ENCODE measurements at regions of chr17 and their contacts with region 1.

Region 1: GRCh38 chr17:67441052-67441927 is 64.2 kb downstream of the PITPNC1 start:
- DNase-seq: peak; percentile 86
- H3K4me3 Mint-ChIP-seq: peak overlapping the region; percentile 84
- H3K27ac Mint-ChIP-seq: peak overlapping the region; percentile 99
- H3K4me1 Mint-ChIP-seq: peaks cover 62% of the 10 kb centered on the region
- H3K27me3 Mint-ChIP-seq: no peaks in the 10 kb centered on the region

Region 2: DNA sequence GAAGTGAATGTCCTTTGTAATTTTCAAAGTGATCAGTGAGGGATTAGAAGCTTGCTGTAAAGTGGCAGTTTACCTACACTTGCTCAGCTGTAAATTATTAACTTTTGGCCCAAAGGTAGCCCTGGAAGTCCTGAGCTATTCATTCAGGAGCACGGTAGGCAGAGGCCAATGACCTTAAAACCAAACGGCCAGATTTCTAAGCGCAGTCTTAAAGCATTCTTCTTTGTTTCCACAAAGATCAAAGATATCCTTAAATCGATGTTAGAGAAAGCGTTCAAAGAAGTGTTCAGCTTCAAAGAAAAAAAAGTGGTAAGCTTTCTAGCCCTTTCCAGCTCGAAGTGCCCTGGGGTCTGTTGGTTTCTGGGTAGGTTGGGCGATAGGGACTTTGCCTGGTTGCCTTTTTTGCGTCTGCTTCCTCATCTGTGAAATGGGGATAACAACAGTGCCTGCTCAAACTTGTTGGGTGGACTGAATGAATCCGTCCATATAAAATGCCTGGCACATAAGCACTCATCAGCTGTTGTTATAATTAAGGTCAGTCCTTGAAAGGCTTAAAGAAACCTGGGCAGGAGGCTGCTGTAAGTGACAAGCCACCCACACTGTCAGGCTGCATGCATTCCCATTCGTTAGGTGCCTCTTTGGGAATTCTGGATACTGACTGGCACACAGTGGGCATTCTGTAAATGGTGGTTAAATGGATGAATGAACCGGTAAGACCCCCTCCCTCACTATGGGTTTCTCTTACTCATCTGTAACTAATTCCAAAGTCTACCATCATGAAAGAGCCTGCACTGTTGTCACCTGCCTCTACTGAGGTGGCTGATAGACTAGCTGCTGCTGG is 1025.7 kb before region 1 on chr17:
- CTCF ChIA-PET with region 1: no interaction called
- POLR2A ChIA-PET with region 1: no interaction called
- intact Hi-C with region 1: no loop called
- DNase-seq: no peak
- H3K4me3 Mint-ChIP-seq: no peak overlapping the region
- H3K27ac Mint-ChIP-seq: no peak overlapping the region
- H3K4me1 Mint-ChIP-seq: peaks cover 65% of the 10 kb centered on the region
- H3K27me3 Mint-ChIP-seq: no peaks in the 10 kb centered on the region

Region 3: DNA sequence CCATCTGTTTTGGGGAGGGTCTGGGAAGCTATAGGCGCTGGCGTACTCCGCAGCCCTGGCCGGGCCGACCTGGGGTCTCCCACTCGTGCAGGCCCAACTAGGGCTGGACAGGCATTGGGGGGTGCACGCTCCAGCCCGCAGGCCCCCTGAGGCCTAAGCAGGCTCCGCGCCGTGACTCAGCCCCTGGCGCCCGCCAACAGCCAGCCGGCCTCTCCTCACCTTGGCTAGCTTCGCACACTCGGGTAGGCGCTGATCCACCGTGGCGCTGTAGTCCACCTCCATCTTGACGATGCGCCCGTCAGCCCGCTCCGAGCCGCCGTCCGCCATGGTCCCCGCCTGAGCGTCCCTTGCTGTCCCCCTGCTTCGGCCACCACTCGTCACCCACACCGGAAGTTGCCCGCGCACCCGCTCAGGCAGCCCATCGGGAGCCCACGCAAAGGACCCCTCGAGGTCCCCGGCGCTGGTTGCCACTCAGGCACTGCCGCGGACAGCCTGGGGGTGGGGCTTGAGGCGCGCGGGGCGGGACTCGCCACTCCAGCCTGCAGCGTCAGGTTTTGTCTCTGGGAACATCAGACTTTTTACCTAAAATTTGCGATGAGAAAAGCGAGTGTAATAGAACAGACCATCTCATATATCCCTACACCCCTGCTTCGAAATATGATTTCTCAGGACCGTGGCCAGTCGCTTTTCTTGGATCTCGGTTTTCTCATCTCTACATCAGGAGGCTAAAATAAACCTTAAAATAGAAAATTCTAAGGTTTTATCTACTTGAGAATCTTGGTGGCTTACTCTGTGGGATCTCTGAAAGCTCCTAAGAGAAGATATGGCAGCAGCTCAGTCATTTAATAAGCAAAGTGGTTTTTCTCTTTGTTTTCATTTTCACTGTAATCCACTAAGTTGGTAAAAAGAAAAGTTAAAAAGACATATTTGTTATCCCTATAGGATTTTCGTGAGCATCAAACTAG is 74.8 kb before region 1 on chr17 and contains the start of gene PSMD12:
- CTCF ChIA-PET with region 1: interaction called, 4 read pairs
- POLR2A ChIA-PET with region 1: interaction called, 11 read pairs
- intact Hi-C with region 1: no loop called
- DNase-seq: peak; percentile 96
- H3K4me3 Mint-ChIP-seq: peak within 1 kb of the TSS; percentile 95
- H3K27ac Mint-ChIP-seq: peak within 1 kb of the TSS; percentile 98
- H3K4me1 Mint-ChIP-seq: peaks cover 45% of the 10 kb centered on the region
- H3K27me3 Mint-ChIP-seq: no peaks in the 10 kb centered on the region
- total RNA-seq, gene PSMD12: 94.0 to 98.6 TPM

Region 4: GRCh38 chr17:67421869-67422273 is 19.4 kb before region 1 on chr17:
- CTCF ChIA-PET with region 1: interaction called, 5 read pairs
- POLR2A ChIA-PET with region 1: interaction called, 17 read pairs
- intact Hi-C with region 1: loop called (anchors 1 kb)
- DNase-seq: peak; percentile 71
- H3K4me3 Mint-ChIP-seq: peak overlapping the region; percentile 42
- H3K27ac Mint-ChIP-seq: peak overlapping the region; percentile 91
- H3K4me1 Mint-ChIP-seq: peaks cover 74% of the 10 kb centered on the region
- H3K27me3 Mint-ChIP-seq: no peaks in the 10 kb centered on the region

Region 5: GRCh38 chr17:67452681-67453554 is 11.6 kb after region 1 on chr17:
- CTCF ChIA-PET with region 1: interaction called, 10 read pairs
- POLR2A ChIA-PET with region 1: interaction called, 21 read pairs
- intact Hi-C with region 1: loop called (anchors 1 kb)
- DNase-seq: peak; percentile 63
- H3K4me3 Mint-ChIP-seq: peak overlapping the region; percentile 55
- H3K27ac Mint-ChIP-seq: peak overlapping the region; percentile 95
- H3K4me1 Mint-ChIP-seq: peaks cover 83% of the 10 kb centered on the region
- H3K27me3 Mint-ChIP-seq: no peaks in the 10 kb centered on the region